ENCODE measurements at regions of chr3 and their contacts with region 1.

Region 1: GRCh38 chr3:35965908-35966307 is 326.6 kb downstream of the ARPP21 start:
- DNase-seq: no peak
- ATAC-seq: peak; percentile 89
- H3K4me3 Mint-ChIP-seq: no peak overlapping the region
- H3K27ac Mint-ChIP-seq: no peak overlapping the region
- H3K4me1 Mint-ChIP-seq: peaks cover 7% of the 10 kb centered on the region
- H3K27me3 Mint-ChIP-seq: no peaks in the 10 kb centered on the region
- CTCF ChIP-seq: no peak

Region 2: DNA sequence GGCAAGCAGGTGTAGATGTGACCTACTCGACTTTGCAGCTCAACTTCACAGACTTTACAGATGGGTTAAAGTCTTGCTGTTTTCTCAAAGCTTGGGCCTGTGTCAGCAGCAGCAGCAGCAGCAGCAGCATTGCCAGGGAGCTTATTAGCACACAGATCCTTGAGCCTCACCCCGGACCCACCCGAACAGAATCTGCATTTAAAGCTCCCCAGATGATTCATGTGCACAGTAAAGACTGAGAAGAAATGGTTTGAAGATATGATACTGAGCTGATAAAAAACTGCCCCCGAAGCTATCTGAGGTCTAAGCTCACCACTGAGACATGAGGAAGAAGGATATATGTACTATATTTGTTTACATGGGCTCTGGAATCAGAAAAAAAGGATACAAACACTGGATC is 94.9 kb before region 1 on chr3:
- CTCF ChIA-PET with region 1: no interaction called
- POLR2A ChIA-PET with region 1: no interaction called
- DNase-seq: no peak
- ATAC-seq: peak; percentile 30; the same call in 1 of the 2 replicates
- H3K4me3 Mint-ChIP-seq: no peak overlapping the region
- H3K27ac Mint-ChIP-seq: no peak overlapping the region
- H3K4me1 Mint-ChIP-seq: peaks cover 7% of the 10 kb centered on the region
- H3K27me3 Mint-ChIP-seq: no peaks in the 10 kb centered on the region
- CTCF ChIP-seq: no peak

Region 3: GRCh38 chr3:36124118-36124796 is 158.3 kb after region 1 on chr3:
- CTCF ChIA-PET with region 1: interaction called, 15 read pairs
- POLR2A ChIA-PET with region 1: no interaction called
- DNase-seq: peak; percentile 70
- ATAC-seq: peak; percentile 98
- H3K4me3 Mint-ChIP-seq: no peak overlapping the region
- H3K27ac Mint-ChIP-seq: no peak overlapping the region
- H3K4me1 Mint-ChIP-seq: peaks cover 11% of the 10 kb centered on the region
- H3K27me3 Mint-ChIP-seq: no peaks in the 10 kb centered on the region
- CTCF ChIP-seq: 0 out of 2 replicates have a peak, but pooled peaks have one; percentile 53

Region 4: GRCh38 chr3:36540888-36541518 is 575.1 kb after region 1 on chr3:
- CTCF ChIA-PET with region 1: interaction called, 10 read pairs
- POLR2A ChIA-PET with region 1: no interaction called
- DNase-seq: peak; percentile 58
- ATAC-seq: peak; percentile 86
- H3K4me3 Mint-ChIP-seq: no peak overlapping the region
- H3K27ac Mint-ChIP-seq: no peak overlapping the region
- H3K4me1 Mint-ChIP-seq: no peaks in the 10 kb centered on the region
- H3K27me3 Mint-ChIP-seq: no peaks in the 10 kb centered on the region
- CTCF ChIP-seq: peak; percentile 74

Region 5: DNA sequence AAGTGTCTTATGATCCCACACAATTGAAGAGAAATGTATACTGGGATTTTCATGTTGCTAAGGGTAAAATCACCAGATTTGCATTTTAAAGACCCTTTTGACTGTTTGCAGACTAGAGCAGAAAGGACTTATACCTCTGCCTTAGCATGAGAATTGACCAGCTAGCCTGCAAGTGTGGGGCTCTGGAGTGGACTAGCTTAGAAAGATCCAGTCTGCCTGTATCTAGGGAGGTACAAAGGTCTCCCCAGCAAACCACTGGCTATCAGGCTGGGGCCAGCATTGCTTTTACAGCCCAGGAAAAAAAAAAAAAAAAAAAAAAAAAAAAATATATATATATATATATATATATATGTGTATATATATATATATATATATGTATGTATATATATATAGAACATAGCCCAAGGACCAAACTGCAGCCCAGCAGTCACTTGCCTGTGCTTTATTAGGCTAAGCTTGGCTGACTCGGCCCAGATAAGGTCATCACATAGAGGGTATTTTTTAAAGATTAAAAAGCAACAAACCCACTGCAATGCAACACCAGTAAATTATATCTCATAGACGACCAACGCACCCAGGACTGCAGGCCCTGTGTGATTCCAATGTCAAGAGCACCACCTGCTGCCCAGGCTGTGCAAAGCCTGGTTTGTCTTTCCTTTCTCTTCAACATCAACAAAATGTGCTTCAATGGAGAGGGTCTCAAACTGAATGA is 734.8 kb after region 1 on chr3:
- CTCF ChIA-PET with region 1: interaction called, 21 read pairs
- POLR2A ChIA-PET with region 1: no interaction called
- DNase-seq: peak; percentile 69
- ATAC-seq: peak; percentile 86
- H3K4me3 Mint-ChIP-seq: no peak overlapping the region
- H3K27ac Mint-ChIP-seq: no peak overlapping the region
- H3K4me1 Mint-ChIP-seq: peaks cover 18% of the 10 kb centered on the region
- H3K27me3 Mint-ChIP-seq: no peaks in the 10 kb centered on the region
- CTCF ChIP-seq: peak; percentile 51